ENCODE measurements at regions of chr20 and their contacts with region 1.

Region 1: GRCh38 chr20:62142245-62143117 is 713 bp downstream of the PSMA7 start:
- DNase-seq: no peak
- H3K27ac ChIP-seq: peak overlapping the region; percentile 91
- CTCF ChIP-seq: no peak

Region 2: GRCh38 chr20:62030834-62031434 is 111.5 kb before region 1 on chr20:
- CTCF ChIA-PET with region 1: no interaction called
- POLR2A ChIA-PET with region 1: no interaction called
- DNase-seq: peak; percentile 48
- H3K27ac ChIP-seq: peak overlapping the region; percentile 18; the same call in 1 of the 2 replicates
- CTCF ChIP-seq: no peak

Region 3: GRCh38 chr20:62128502-62128901 is 14.0 kb before region 1 on chr20:
- CTCF ChIA-PET with region 1: interaction called, 10 read pairs
- POLR2A ChIA-PET with region 1: interaction called, 5 read pairs
- DNase-seq: no peak
- H3K27ac ChIP-seq: no peak overlapping the region
- CTCF ChIP-seq: no peak

Region 4: DNA sequence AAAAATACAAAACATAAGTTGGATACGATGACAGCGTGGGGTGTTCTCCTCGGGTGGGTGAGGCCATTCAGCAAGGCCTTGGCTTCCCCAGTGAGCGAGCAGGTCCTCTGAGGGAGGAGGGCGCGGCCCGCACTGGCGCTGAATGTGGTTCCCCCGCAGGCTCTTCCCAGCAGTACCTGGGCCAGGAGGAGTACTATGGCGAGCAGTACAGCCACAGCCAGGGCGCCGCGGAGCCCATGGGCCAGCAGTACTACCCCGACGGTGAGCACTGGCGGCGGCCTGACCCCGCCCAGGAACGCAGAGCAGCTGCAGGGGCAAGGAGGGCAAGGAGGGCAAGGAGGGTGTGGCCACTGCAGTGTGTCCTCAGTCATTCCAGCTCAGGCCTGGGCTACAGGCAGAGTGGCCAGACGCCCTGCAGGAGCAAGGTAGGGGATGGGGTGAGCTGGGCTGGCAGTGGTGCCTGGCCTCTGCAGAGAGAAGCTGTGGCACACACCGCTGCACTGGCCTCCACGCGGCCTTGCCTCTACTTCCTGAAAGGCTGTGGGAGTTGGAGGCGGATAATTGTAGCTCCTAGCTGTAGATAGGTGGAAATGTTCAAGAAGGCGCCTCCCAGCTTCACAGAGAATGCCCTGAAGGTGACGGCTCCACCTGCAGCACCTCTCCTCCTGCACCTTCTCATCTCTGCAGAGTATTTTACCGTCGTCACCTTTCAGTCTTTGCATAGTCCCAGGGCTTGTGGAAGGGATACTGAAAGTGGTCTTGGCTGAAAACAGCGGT is 21.7 kb after region 1 on chr20:
- CTCF ChIA-PET with region 1: no interaction called
- POLR2A ChIA-PET with region 1: no interaction called
- DNase-seq: no peak
- H3K27ac ChIP-seq: peak overlapping the region; percentile 89
- CTCF ChIP-seq: no peak

Region 5: GRCh38 chr20:62571667-62572344 is 429.3 kb after region 1 on chr20:
- CTCF ChIA-PET with region 1: no interaction called
- POLR2A ChIA-PET with region 1: no interaction called
- DNase-seq: peak; percentile 63
- H3K27ac ChIP-seq: no peak overlapping the region
- CTCF ChIP-seq: no peak

Measured in RWPE1 (cell line).